HepG2 (cell line): ENCODE measurements at regions of chr10 and their contacts with region 1.

Region 1: GRCh38 chr10:79195091-79195923 is 126.5 kb downstream of the ZMIZ1 start:
- DNase-seq: peak; percentile 71
- ATAC-seq: peak; percentile 85
- H3K4me3 ChIP-seq: no peak overlapping the region
- H3K27ac ChIP-seq: peak overlapping the region; percentile 58
- H3K4me1 ChIP-seq: peaks cover 36% of the 10 kb centered on the region
- H3K27me3 ChIP-seq: no peaks in the 10 kb centered on the region
- CTCF ChIP-seq: peak; percentile 98
- EP300 ChIP-seq: no peak
- POLR2A ChIP-seq: no peak
- RAD21 ChIP-seq: peak; percentile 97

Region 2: GRCh38 chr10:78047314-78047891 is 1147.9 kb before region 1 on chr10:
- CTCF ChIA-PET with region 1: no interaction called
- POLR2A ChIA-PET with region 1: no interaction called
- in situ Hi-C with region 1: no loop called
- intact Hi-C with region 1: loop called (anchors 5 kb)
- DNase-seq: peak; percentile 79
- ATAC-seq: peak; percentile 70
- H3K4me3 ChIP-seq: no peak overlapping the region
- H3K27ac ChIP-seq: no peak overlapping the region
- H3K4me1 ChIP-seq: peaks cover 28% of the 10 kb centered on the region
- H3K27me3 ChIP-seq: no peaks in the 10 kb centered on the region
- CTCF ChIP-seq: peak; percentile 96
- EP300 ChIP-seq: no peak
- POLR2A ChIP-seq: no peak
- RAD21 ChIP-seq: peak; percentile 83

Region 3: GRCh38 chr10:79068562-79069324 is 126.6 kb before region 1 on chr10 and contains the start of gene ZMIZ1:
- CTCF ChIA-PET with region 1: interaction called, 4 read pairs
- POLR2A ChIA-PET with region 1: interaction called, 5 read pairs
- in situ Hi-C with region 1: no loop called
- intact Hi-C with region 1: loop called (anchors 2 kb)
- DNase-seq: peak; percentile 88
- ATAC-seq: peak; percentile 7
- H3K4me3 ChIP-seq: peak within 1 kb of the TSS; percentile 93 to 98 (median 93)
- H3K27ac ChIP-seq: peak within 1 kb of the TSS; percentile 91
- H3K4me1 ChIP-seq: peaks cover 56% of the 10 kb centered on the region
- H3K27me3 ChIP-seq: no peaks in the 10 kb centered on the region; a peak in 1 of 5 replicates
- CTCF ChIP-seq: no peak
- EP300 ChIP-seq: peak in 1 of 2 experiments; percentile 63; a peak in 2 of 4 replicates
- POLR2A ChIP-seq: peak in 1 of 2 experiments; percentile 71; a peak in 2 of 4 replicates
- RAD21 ChIP-seq: peak; percentile 67
- total RNA-seq, gene ZMIZ1: 5.3 and 11.0 TPM in 2 replicates

Region 4: GRCh38 chr10:79105150-79105739 is 90.1 kb before region 1 on chr10:
- CTCF ChIA-PET with region 1: no interaction called
- POLR2A ChIA-PET with region 1: no interaction called
- in situ Hi-C with region 1: no loop called
- intact Hi-C with region 1: loop called (anchors 5 kb)
- DNase-seq: peak; percentile 90
- ATAC-seq: peak; percentile 93
- H3K4me3 ChIP-seq: no peak overlapping the region; a peak in 1 of 6 replicates
- H3K27ac ChIP-seq: peak overlapping the region; percentile 69
- H3K4me1 ChIP-seq: peaks cover 88% of the 10 kb centered on the region
- H3K27me3 ChIP-seq: no peaks in the 10 kb centered on the region
- CTCF ChIP-seq: peak; percentile 28
- EP300 ChIP-seq: peak in 1 of 2 experiments; percentile 58; a peak in 2 of 4 replicates
- POLR2A ChIP-seq: no peak
- RAD21 ChIP-seq: peak; percentile 37; the same call in 1 of the 2 replicates

Region 5: GRCh38 chr10:79155301-79156081 is 39.8 kb before region 1 on chr10:
- CTCF ChIA-PET with region 1: no interaction called
- POLR2A ChIA-PET with region 1: interaction called, 10 read pairs
- in situ Hi-C with region 1: no loop called
- intact Hi-C with region 1: loop called (anchors 2 kb)
- DNase-seq: no peak
- ATAC-seq: no peak
- H3K4me3 ChIP-seq: no peak overlapping the region
- H3K27ac ChIP-seq: peak overlapping the region; percentile 39
- H3K4me1 ChIP-seq: peaks cover 70% of the 10 kb centered on the region
- H3K27me3 ChIP-seq: no peaks in the 10 kb centered on the region
- CTCF ChIP-seq: no peak
- EP300 ChIP-seq: no peak
- POLR2A ChIP-seq: no peak
- RAD21 ChIP-seq: 0 out of 2 replicates have a peak, but pooled peaks have one; percentile 30

Region 6: GRCh38 chr10:79230328-79230830 is 35.1 kb after region 1 on chr10:
- CTCF ChIA-PET with region 1: no interaction called
- POLR2A ChIA-PET with region 1: no interaction called
- in situ Hi-C with region 1: no loop called
- intact Hi-C with region 1: no loop called
- DNase-seq: no peak
- ATAC-seq: no peak
- H3K4me3 ChIP-seq: no peak overlapping the region
- H3K27ac ChIP-seq: no peak overlapping the region
- H3K4me1 ChIP-seq: no peaks in the 10 kb centered on the region
- H3K27me3 ChIP-seq: no peaks in the 10 kb centered on the region
- CTCF ChIP-seq: no peak
- EP300 ChIP-seq: no peak
- POLR2A ChIP-seq: no peak
- RAD21 ChIP-seq: no peak

Region 7: DNA sequence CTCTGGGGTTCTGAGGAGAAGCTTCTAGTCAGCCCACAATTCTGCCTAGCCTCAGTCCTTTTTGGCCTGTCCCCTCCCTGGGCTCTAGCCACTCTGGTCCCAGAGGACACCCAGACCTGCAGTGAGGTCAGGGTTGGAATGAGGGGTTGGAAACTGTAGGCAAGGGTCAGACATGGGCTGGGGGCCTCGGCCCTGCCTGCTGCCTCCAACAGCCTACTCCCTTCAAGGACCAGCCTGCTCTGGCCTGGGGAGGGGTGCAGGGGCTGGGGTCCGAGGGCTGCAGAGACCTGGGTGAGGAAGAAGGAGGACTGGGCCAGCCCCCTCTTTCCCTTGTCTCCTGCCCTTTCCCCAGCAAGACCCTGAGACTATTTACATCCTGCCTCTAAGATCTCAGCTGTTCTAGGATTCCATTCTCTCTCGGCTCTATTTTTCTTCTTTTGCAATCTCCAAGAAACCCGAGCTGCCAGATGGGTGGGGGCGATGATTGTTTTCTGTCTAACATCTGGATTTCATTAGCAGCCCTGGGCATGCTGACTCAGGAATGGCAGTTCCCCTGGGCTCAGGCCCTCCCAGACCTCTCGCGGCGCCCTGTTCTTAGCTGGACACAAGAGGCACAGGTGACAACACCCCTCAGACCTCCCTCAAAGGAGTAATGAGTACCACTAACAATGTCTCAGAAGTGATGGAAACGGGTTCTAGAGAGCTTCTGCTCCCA is 227.0 kb after region 1 on chr10:
- CTCF ChIA-PET with region 1: no interaction called
- POLR2A ChIA-PET with region 1: no interaction called
- in situ Hi-C with region 1: no loop called
- intact Hi-C with region 1: no loop called
- DNase-seq: no peak
- ATAC-seq: no peak
- H3K4me3 ChIP-seq: no peak overlapping the region
- H3K27ac ChIP-seq: no peak overlapping the region
- H3K4me1 ChIP-seq: peaks cover 35% of the 10 kb centered on the region
- H3K27me3 ChIP-seq: no peaks in the 10 kb centered on the region
- CTCF ChIP-seq: no peak
- EP300 ChIP-seq: no peak
- POLR2A ChIP-seq: no peak
- RAD21 ChIP-seq: no peak